ENCODE measurements at regions of chr1 and their contacts with region 1.

Region 1: DNA sequence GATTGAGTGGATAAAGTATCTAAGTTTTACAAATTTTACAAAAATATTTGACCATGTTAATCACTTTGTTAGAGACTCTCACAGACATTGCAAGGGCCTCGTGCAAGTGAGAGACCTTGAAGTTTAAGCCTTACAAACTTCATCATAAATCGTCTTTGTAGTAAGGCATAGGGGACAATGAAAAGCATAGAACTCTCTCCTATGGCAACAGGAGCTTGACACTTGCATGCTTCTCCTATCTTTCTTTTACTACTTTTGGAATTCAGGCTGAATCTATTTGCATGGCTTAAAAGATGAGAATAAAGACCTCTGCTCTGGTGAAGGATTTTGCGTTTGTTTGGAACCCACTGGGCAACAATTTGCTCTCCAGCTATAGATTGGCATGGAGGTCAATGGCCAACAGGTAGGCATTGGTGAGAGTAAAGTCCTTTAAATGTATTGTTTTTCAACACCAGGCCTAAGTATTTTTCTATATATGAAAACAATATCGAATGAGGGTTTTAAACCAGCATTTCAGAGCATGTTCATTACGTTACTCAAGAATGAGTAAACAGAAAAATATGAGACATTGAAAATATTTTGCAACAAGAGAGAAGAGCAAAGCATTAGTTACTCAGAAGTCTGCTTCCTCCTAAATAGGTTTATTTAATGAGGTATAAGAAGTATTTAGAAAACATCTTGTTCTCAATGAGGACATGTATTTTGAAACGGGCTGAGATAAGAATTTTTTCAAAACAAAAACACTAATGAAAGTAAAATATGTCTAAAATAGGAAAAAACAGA is 192.2 kb downstream of the TGFB2 start:
- DNase-seq: peak; percentile 74
- H3K4me3 Mint-ChIP-seq: peak overlapping the region; percentile 5
- H3K27ac Mint-ChIP-seq: peak overlapping the region; percentile 98
- H3K4me1 Mint-ChIP-seq: peaks cover 36% of the 10 kb centered on the region
- H3K27me3 Mint-ChIP-seq: no peaks in the 10 kb centered on the region
- CTCF ChIP-seq: no peak

Region 2: DNA sequence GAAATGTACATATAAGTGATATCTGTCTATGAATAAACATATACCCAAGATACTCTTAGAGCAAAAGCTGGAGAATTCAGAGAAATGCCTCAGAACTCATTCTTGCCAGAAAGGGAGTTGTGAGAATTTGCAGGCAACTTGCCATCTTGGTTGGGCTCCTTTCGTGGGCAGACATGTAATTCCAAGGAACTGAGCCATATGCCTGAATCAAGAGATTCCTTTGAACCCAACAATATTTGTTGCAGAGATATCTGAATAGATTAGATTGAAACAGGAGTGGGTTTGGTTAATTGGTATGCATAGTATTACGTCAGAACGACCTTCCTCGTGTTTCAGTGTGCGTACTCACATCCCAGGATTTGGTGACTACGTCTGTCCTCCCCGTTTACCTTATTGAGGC is 125.1 kb before region 1 on chr1:
- CTCF ChIA-PET with region 1: no interaction called
- POLR2A ChIA-PET with region 1: no interaction called
- intact Hi-C with region 1: no loop called
- DNase-seq: no peak
- H3K4me3 Mint-ChIP-seq: no peak overlapping the region
- H3K27ac Mint-ChIP-seq: no peak overlapping the region
- H3K4me1 Mint-ChIP-seq: peaks cover 10% of the 10 kb centered on the region
- H3K27me3 Mint-ChIP-seq: no peaks in the 10 kb centered on the region
- CTCF ChIP-seq: no peak

Region 3: DNA sequence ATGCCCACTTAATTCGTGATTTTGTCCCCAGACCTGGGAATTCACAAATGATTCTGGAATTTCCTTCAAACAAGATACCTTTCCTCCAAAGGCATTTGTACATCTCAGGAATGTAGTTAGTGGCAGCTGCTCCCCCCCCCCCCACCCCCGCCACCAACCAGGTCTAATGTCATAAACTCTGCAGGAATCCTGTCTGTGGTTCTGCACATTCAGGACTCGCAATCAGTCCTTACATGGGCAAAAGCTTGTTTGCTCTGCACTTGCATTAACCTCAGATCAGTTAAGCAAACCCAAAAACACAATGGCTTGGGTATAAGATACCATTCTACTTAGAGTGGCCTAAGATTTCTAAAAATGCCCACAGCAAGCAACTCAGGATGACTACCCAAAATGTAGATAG is 48.3 kb before region 1 on chr1:
- CTCF ChIA-PET with region 1: no interaction called
- POLR2A ChIA-PET with region 1: no interaction called
- intact Hi-C with region 1: no loop called
- DNase-seq: no peak
- H3K4me3 Mint-ChIP-seq: no peak overlapping the region
- H3K27ac Mint-ChIP-seq: no peak overlapping the region
- H3K4me1 Mint-ChIP-seq: peaks cover 18% of the 10 kb centered on the region
- H3K27me3 Mint-ChIP-seq: no peaks in the 10 kb centered on the region
- CTCF ChIP-seq: no peak

Region 4: GRCh38 chr1:218521375-218522169 is 15.7 kb before region 1 on chr1:
- CTCF ChIA-PET with region 1: interaction called, 11 read pairs
- POLR2A ChIA-PET with region 1: interaction called, 3 read pairs
- intact Hi-C with region 1: no loop called
- DNase-seq: peak; percentile 92
- H3K4me3 Mint-ChIP-seq: no peak overlapping the region
- H3K27ac Mint-ChIP-seq: no peak overlapping the region
- H3K4me1 Mint-ChIP-seq: peaks cover 13% of the 10 kb centered on the region
- H3K27me3 Mint-ChIP-seq: no peaks in the 10 kb centered on the region
- CTCF ChIP-seq: peak; percentile 90

Region 5: GRCh38 chr1:218945050-218945449 is 407.7 kb after region 1 on chr1:
- CTCF ChIA-PET with region 1: no interaction called
- POLR2A ChIA-PET with region 1: no interaction called
- intact Hi-C with region 1: loop called (anchors 2 kb)
- DNase-seq: peak; percentile 92
- H3K4me3 Mint-ChIP-seq: no peak overlapping the region
- H3K27ac Mint-ChIP-seq: no peak overlapping the region
- H3K4me1 Mint-ChIP-seq: no peaks in the 10 kb centered on the region
- H3K27me3 Mint-ChIP-seq: no peaks in the 10 kb centered on the region
- CTCF ChIP-seq: no peak

Measured in MCF 10A (cell line).